ENCODE measurements at regions of chr11 and their contacts with region 1.

Region 1: GRCh38 chr11:47715082-47715669 is at the start of gene AGBL2:
- DNase-seq: peak; percentile 93
- H3K4me3 ChIP-seq: peak within 1 kb of the TSS; percentile 72 to 90 (median 78)
- H3K27ac ChIP-seq: peak within 1 kb of the TSS; percentile 67 to 82 (median 76)
- H3K4me1 ChIP-seq: peaks cover 0 to 11% (median 5%) of the 10 kb centered on the region in 4 donors
- H3K27me3 ChIP-seq: no peaks in the 10 kb centered on the region
- CTCF ChIP-seq: no peak
- EP300 ChIP-seq: no peak
- POLR2A ChIP-seq: no peak
- total RNA-seq, gene AGBL2: 0.42 to 1.8 TPM in 2 of 4 donors, not detected in the others

Region 2: DNA sequence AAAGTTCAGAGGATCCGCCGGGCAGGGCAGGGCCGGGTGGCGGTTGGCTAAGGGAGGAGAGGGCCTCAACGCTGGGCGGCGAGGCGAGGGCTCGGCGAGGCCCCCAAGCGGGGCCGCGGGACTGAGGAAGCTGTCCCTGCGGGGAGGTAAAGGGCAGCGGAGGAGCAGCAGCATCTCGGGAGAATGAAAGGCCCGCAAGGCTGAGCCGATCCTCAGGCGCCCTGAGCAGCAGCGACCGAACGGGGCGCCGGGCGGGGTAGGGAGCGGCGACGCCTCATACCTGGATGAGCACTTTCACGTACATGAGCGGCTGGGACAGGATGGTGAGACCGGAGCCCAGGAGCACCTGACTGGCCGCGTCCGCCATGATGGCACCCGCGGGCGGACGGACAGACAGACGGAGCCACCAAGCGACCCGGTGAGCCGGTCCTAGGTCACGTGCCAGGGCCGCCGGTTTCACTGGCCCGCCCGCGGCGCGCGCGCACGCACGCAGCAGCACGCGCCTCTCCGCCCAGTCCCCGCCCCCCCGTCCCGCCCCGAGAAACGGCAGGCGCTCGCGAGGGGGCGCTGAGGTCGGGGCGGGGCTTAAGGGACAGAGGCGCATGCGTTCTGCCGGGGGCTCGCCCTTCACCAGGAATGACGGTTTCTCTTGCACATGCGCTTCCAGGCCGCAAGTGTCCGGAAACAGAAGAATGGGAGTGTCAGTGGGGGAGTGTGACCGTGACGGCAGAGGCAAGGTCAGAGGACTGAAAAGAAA is 72.9 kb before region 1 on chr11 and contains the start of gene MTCH2:
- intact Hi-C with region 1: loop called (anchors 5 kb)
- DNase-seq: peak; percentile 99
- H3K4me3 ChIP-seq: peak within 1 kb of the TSS; percentile 72 to 92 (median 88)
- H3K27ac ChIP-seq: peak within 1 kb of the TSS; percentile 92 to 99 (median 95)
- H3K4me1 ChIP-seq: peaks cover 14 to 31% (median 28%) of the 10 kb centered on the region in 4 donors
- H3K27me3 ChIP-seq: no peaks in the 10 kb centered on the region
- CTCF ChIP-seq: peak; percentile 39 to 47 (median 40)
- EP300 ChIP-seq: no peak
- POLR2A ChIP-seq: peak; percentile 47
- total RNA-seq, gene MTCH2: 32.5 to 40.6 (median 37.6) TPM

Measured in esophagus muscularis mucosa (tissue), 4 donors.